Pancreas (tissue), 10 donors: ENCODE measurements at regions of chr16 and their contacts with region 1.

Region 1: GRCh38 chr16:55701442-55702319 is 45.9 kb downstream of the SLC6A2 start:
- DNase-seq: peak; percentile 38 to 88 (median 74)
- ATAC-seq: peak in 3 of 4 donors; percentile 70 to 81 (median 75)
- H3K4me3 ChIP-seq: no peak overlapping the region
- H3K27ac ChIP-seq: no peak overlapping the region
- H3K4me1 ChIP-seq: no peaks in the 10 kb centered on the region
- H3K27me3 ChIP-seq: no peaks in the 10 kb centered on the region
- CTCF ChIP-seq: peak; percentile 36 to 60 (median 54)

Region 2: GRCh38 chr16:55543472-55543871 is 158.2 kb before region 1 on chr16:
- intact Hi-C with region 1: loop called in 1 of 3 experiments (anchors 10 kb)
- DNase-seq: no peak
- ATAC-seq: peak in 3 of 4 donors; percentile 56 to 78 (median 77)
- H3K4me3 ChIP-seq: no peak overlapping the region
- H3K27ac ChIP-seq: no peak overlapping the region
- H3K4me1 ChIP-seq: no peaks in the 10 kb centered on the region
- H3K27me3 ChIP-seq: no peaks in the 10 kb centered on the region
- CTCF ChIP-seq: peak in 1 of 4 donors; percentile 20

Region 3: GRCh38 chr16:55817236-55817912 is 115.7 kb after region 1 on chr16:
- intact Hi-C with region 1: no loop called
- DNase-seq: no peak
- ATAC-seq: no peak
- H3K4me3 ChIP-seq: no peak overlapping the region
- H3K27ac ChIP-seq: no peak overlapping the region
- H3K4me1 ChIP-seq: no peaks in the 10 kb centered on the region
- H3K27me3 ChIP-seq: no peaks in the 10 kb centered on the region
- CTCF ChIP-seq: no peak